GM12878 (cell line): ENCODE measurements at regions of chr2 and their contacts with region 1.

Region 1: DNA sequence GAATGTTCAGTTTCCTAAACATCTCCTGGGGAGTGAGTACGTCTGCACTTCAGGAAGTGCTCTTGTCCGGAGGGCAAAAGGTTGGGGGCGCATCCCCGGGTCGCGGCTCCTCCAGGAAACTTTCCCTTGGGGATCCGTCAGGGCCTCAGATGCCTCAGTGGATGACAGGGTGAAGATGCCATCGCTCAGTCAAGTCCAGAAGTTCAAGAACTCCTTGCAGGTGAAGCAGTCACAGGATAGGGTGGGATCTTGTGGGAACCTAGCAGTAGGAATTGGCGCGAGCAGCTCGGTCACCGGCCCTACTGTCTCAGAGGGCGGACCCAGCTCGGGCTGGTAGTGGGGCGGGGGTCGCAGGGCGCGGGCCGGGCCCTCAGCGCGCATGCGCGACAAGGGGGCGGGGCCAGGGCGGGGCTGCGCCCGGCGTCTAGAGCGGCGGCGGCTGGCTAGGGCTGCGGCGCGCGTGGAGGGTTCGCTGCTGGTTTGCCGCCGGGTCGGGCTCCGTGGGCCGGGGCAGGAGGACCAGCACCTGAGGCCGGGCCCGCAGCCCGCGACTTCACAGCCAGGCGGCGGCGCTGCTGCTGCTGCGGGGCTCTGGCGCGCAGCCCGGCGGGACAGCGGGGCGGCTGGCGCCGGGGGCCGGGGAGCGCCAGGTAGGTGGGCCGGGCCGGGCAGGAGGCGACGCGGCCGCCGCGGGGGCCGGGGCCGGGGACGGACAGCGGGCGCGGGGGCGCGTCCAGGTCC is at the start of gene INPP4A:
- DNase-seq: no peak
- ATAC-seq: peak; percentile 71
- H3K4me3 ChIP-seq: peak within 1 kb of the TSS; percentile 86
- H3K27ac ChIP-seq: peak within 1 kb of the TSS; percentile 83
- H3K4me1 ChIP-seq: no peaks in the 10 kb centered on the region
- H3K27me3 ChIP-seq: no peaks in the 10 kb centered on the region
- CTCF ChIP-seq: peak in 1 of 3 experiments; percentile 13; a peak in 1 of 6 replicates
- EP300 ChIP-seq: no peak
- POLR2A ChIP-seq: peak; percentile 80
- RAD21 ChIP-seq: peak; percentile 32; the same call in 1 of the 2 replicates
- polyA plus RNA-seq, gene INPP4A: 4.7 to 6.2 TPM

Region 2: GRCh38 chr2:98175811-98176210 is 268.8 kb before region 1 on chr2:
- CTCF ChIA-PET with region 1: no interaction called
- POLR2A ChIA-PET with region 1: no interaction called
- RAD21 ChIA-PET with region 1: no interaction called
- SMC1A ChIA-PET with region 1: no interaction called
- in situ Hi-C with region 1: no loop called
- intact Hi-C with region 1: no loop called
- DNase-seq: no peak
- ATAC-seq: peak; percentile 75
- H3K4me3 ChIP-seq: no peak overlapping the region
- H3K27ac ChIP-seq: no peak overlapping the region
- H3K4me1 ChIP-seq: no peaks in the 10 kb centered on the region
- H3K27me3 ChIP-seq: peaks cover 0 to 4% of the 10 kb centered on the region in 2 experiments; a peak in 1 of 4 replicates
- CTCF ChIP-seq: peak; percentile 30 to 53 (median 34); a peak in 4 of 6 replicates
- EP300 ChIP-seq: no peak
- POLR2A ChIP-seq: no peak
- RAD21 ChIP-seq: peak; percentile 65

Region 3: GRCh38 chr2:98280376-98281102 is 164.1 kb before region 1 on chr2:
- CTCF ChIA-PET with region 1: no interaction called
- POLR2A ChIA-PET with region 1: no interaction called
- RAD21 ChIA-PET with region 1: no interaction called
- SMC1A ChIA-PET with region 1: no interaction called
- in situ Hi-C with region 1: no loop called
- intact Hi-C with region 1: no loop called
- DNase-seq: no peak
- ATAC-seq: peak; percentile 70
- H3K4me3 ChIP-seq: no peak overlapping the region
- H3K27ac ChIP-seq: no peak overlapping the region
- H3K4me1 ChIP-seq: no peaks in the 10 kb centered on the region
- H3K27me3 ChIP-seq: no peaks in the 10 kb centered on the region
- CTCF ChIP-seq: no peak
- EP300 ChIP-seq: no peak; a peak in 1 of 4 replicates
- POLR2A ChIP-seq: no peak
- RAD21 ChIP-seq: no peak

Region 4: DNA sequence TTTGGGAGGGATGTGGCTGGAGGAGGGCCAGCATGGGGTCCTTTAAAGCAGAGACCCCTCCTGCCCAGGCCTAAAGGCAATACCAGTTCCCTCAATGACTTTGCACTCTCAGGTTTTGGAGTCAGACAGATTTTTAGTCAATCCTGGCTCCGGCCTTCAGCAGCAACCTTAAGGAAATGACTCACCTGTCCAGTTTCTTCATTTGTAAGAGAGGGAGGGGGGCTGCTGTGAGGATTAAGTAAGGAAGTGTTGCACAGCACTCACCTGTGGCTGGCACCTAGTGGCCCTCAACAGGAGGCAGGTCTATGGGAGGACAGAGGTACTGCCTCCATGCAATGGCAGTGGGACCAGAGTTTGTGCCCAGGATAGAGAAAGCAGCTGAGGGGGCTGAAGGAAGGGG is 84.6 kb before region 1 on chr2:
- CTCF ChIA-PET with region 1: no interaction called
- POLR2A ChIA-PET with region 1: no interaction called
- RAD21 ChIA-PET with region 1: no interaction called
- SMC1A ChIA-PET with region 1: no interaction called
- in situ Hi-C with region 1: no loop called
- intact Hi-C with region 1: no loop called
- DNase-seq: no peak
- ATAC-seq: no peak
- H3K4me3 ChIP-seq: no peak overlapping the region
- H3K27ac ChIP-seq: no peak overlapping the region
- H3K4me1 ChIP-seq: no peaks in the 10 kb centered on the region
- H3K27me3 ChIP-seq: 0 out of 4 replicates have a peak, but pooled peaks cover 0 to 4% of the 10 kb centered on the region in 2 experiments
- CTCF ChIP-seq: no peak
- EP300 ChIP-seq: no peak
- POLR2A ChIP-seq: no peak
- RAD21 ChIP-seq: no peak

Region 5: DNA sequence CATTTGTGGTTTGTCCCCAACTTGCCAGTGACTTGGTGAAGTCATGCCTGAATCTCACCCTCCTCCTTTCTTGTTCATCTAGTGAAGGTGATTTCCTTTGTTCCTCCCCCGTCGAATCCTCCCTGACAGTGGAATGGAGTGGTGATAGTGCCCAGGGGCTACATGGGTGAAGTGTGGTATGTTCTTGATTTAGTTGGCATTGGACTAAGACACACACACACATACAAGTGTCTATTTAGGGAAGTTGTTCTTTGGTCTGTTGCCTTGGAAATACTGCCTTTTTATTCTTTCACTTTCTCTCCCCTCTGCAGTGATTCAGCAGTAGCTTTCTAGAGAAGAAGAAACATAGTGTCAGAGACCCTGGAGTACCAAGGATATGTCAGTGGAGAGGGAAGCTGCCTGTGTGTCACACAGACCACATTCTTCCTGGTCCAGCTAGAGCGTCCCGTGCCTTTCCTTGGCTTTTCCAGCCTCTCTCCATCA is 10.9 kb after region 1 on chr2:
- CTCF ChIA-PET with region 1: interaction called, 24 read pairs
- POLR2A ChIA-PET with region 1: interaction called, 24 read pairs
- RAD21 ChIA-PET with region 1: interaction called, 24 read pairs
- SMC1A ChIA-PET with region 1: interaction called, 425 read pairs
- in situ Hi-C with region 1: no loop called
- intact Hi-C with region 1: no loop called
- DNase-seq: peak; percentile 68
- ATAC-seq: peak; percentile 53
- H3K4me3 ChIP-seq: peak overlapping the region; percentile 58; the same call in 1 of the 2 replicates
- H3K27ac ChIP-seq: peak overlapping the region; percentile 77
- H3K4me1 ChIP-seq: peaks cover 82% of the 10 kb centered on the region
- H3K27me3 ChIP-seq: no peaks in the 10 kb centered on the region
- CTCF ChIP-seq: no peak
- EP300 ChIP-seq: no peak
- POLR2A ChIP-seq: 0 out of 2 replicates have a peak, but pooled peaks have one; percentile 35
- RAD21 ChIP-seq: no peak

Region 6: DNA sequence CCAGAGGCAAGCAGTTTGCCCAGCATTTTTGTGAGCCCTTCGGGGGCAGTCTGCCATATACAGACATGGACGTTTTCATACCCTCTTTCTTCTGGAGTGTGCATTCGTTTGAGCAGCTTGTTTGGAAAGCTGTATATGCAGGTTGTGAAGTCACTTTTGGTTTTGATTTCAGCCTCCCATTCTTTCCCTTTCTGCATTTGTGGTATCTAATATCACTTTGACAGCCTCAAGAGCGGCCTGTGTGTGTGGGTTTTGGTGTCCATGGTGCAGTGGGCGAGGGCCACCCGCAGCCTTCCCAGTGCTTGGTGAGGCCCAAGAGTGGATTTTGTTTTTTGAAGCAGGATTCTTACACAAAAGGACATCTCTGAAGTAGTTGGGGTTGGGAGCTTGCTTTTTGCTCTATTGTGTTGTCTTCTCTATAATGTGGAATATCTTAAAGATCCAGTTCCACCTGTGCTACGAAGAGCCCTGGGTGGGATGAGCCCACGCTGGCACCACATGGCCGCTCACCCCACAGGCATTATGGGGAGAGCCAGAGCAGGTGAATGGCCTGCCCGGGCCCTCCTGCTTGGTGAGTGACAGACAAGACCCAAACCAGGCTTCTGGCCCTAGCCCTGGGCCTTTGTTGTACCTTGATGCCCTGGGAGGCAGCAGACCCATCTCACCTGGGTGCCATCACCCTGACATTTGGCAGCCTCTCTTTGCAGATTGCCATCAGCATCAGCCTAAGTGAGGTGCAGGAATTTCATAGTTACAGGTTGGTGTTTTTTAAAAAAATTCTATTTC is 29.6 kb after region 1 on chr2:
- CTCF ChIA-PET with region 1: interaction called, 20 read pairs
- POLR2A ChIA-PET with region 1: interaction called, 545 read pairs
- RAD21 ChIA-PET with region 1: interaction called, 199 read pairs
- SMC1A ChIA-PET with region 1: interaction called, 816 read pairs
- in situ Hi-C with region 1: no loop called
- intact Hi-C with region 1: no loop called
- DNase-seq: no peak
- ATAC-seq: peak; percentile 31
- H3K4me3 ChIP-seq: peak overlapping the region; percentile 34; the same call in 1 of the 2 replicates
- H3K27ac ChIP-seq: peak overlapping the region; percentile 88
- H3K4me1 ChIP-seq: peaks cover 96% of the 10 kb centered on the region
- H3K27me3 ChIP-seq: no peaks in the 10 kb centered on the region; a peak in 1 of 4 replicates
- CTCF ChIP-seq: no peak
- EP300 ChIP-seq: no peak
- POLR2A ChIP-seq: no peak
- RAD21 ChIP-seq: no peak

Region 7: GRCh38 chr2:98479959-98480524 is 35.4 kb after region 1 on chr2:
- CTCF ChIA-PET with region 1: interaction called, 29 read pairs
- POLR2A ChIA-PET with region 1: interaction called, 545 read pairs
- RAD21 ChIA-PET with region 1: interaction called, 19 read pairs
- SMC1A ChIA-PET with region 1: interaction called, 816 read pairs
- in situ Hi-C with region 1: no loop called
- intact Hi-C with region 1: loop called (anchors 5 kb)
- DNase-seq: no peak
- ATAC-seq: peak; percentile 53
- H3K4me3 ChIP-seq: 0 out of 2 replicates have a peak overlapping the region, but pooled peaks have one; percentile 10
- H3K27ac ChIP-seq: peak overlapping the region; percentile 89
- H3K4me1 ChIP-seq: peaks cover 98% of the 10 kb centered on the region
- H3K27me3 ChIP-seq: no peaks in the 10 kb centered on the region
- CTCF ChIP-seq: no peak
- EP300 ChIP-seq: no peak
- POLR2A ChIP-seq: no peak; the same call in 1 of the 2 replicates
- RAD21 ChIP-seq: no peak

Region 8: GRCh38 chr2:98518090-98518489 is 73.5 kb after region 1 on chr2:
- CTCF ChIA-PET with region 1: interaction called, 7 read pairs
- POLR2A ChIA-PET with region 1: no interaction called
- RAD21 ChIA-PET with region 1: interaction called, 11 read pairs
- SMC1A ChIA-PET with region 1: interaction called, 4 read pairs
- in situ Hi-C with region 1: no loop called
- intact Hi-C with region 1: loop called (anchors 5 kb)
- DNase-seq: no peak
- ATAC-seq: peak; percentile 84
- H3K4me3 ChIP-seq: no peak overlapping the region
- H3K27ac ChIP-seq: no peak overlapping the region; the same call in 1 of the 2 replicates
- H3K4me1 ChIP-seq: peaks cover 20% of the 10 kb centered on the region
- H3K27me3 ChIP-seq: no peaks in the 10 kb centered on the region
- CTCF ChIP-seq: peak; percentile 69 to 88 (median 71)
- EP300 ChIP-seq: no peak
- POLR2A ChIP-seq: no peak
- RAD21 ChIP-seq: peak; percentile 81